ENCODE measurements at regions of chr4 and their contacts with region 1.

Region 1: GRCh38 chr4:121009578-121010478 is 62.5 kb downstream of the NDNF start:
- DNase-seq: peak in 4 of 10 donors; percentile 28 to 77 (median 64)
- ATAC-seq: peak; percentile 96 to 98
- H3K4me3 Mint-ChIP-seq: peak overlapping the region; percentile 54 to 85 (median 74)
- H3K27ac Mint-ChIP-seq: peak overlapping the region; percentile 89 to 98 (median 96)
- H3K4me1 Mint-ChIP-seq: peaks cover 42 to 95% (median 79%) of the 10 kb centered on the region in 4 donors
- H3K27me3 Mint-ChIP-seq: no peaks in the 10 kb centered on the region

Region 2: DNA sequence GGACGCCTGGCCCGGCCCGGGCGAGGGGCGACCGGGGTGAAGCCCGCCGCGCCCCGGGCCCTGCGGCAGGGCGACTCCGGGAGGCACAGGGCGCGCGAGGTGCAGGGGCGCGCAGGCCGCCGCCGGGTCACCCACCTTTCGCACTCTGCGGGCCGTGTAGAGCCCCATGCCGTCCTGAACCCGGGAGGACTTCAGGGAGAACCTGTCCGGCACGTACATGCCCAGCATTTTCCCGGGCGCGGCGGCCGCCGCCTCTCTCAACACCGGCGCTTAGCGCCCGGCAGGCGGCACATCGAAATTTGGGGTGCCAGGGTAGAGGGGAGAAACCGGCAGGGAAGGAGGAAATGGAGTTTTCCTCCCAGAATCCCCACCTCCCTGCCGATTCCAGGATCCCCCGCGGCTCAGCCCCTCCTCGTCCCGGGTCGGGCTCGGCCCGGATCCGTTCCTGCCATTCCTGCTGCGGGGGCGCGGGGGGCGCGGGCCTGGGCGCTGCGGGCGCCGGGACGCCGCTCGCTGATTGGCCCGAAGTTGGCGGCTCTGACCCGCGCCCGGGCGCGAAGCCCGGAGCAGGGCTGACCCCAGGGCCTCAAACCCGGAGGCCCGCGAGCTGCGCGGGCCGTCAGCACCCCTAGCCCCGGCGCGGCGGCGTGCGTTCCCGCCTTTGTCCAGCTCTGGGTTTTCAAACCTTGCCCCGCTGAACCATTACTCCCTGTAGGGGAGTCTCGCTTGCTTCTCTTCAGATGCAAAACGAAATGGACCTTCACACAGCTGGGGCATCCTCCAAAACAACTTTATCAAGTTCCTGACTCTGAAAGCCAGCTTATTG is 87.2 kb before region 1 on chr4 and contains the start of gene PRDM5:
- POLR2A ChIA-PET with region 1: interaction called, 12 read pairs
- DNase-seq: peak; percentile 2 to 65 (median 34)
- ATAC-seq: peak; percentile 61 to 64
- H3K4me3 Mint-ChIP-seq: peak within 1 kb of the TSS; percentile 85 to 98 (median 94)
- H3K27ac Mint-ChIP-seq: peak within 1 kb of the TSS; percentile 72 to 97 (median 92)
- H3K4me1 Mint-ChIP-seq: peaks cover 10 to 20% (median 14%) of the 10 kb centered on the region in 4 donors
- H3K27me3 Mint-ChIP-seq: peaks cover 0 to 15% (median 0%) of the 10 kb centered on the region in 5 donors
- polyA plus RNA-seq, gene PRDM5: 0.74 to 1.9 (median 0.94) TPM

Region 3: GRCh38 chr4:120995266-120996010 is 14.4 kb before region 1 on chr4:
- POLR2A ChIA-PET with region 1: interaction called, 12 read pairs
- DNase-seq: no peak
- ATAC-seq: peak in 1 of 2 donors; percentile 32
- H3K4me3 Mint-ChIP-seq: peak overlapping the region in 2 of 10 donors; percentile 29 to 51
- H3K27ac Mint-ChIP-seq: peak overlapping the region in 2 of 10 donors; percentile 5 to 36
- H3K4me1 Mint-ChIP-seq: peaks cover 17 to 41% (median 32%) of the 10 kb centered on the region in 4 donors
- H3K27me3 Mint-ChIP-seq: no peaks in the 10 kb centered on the region

Measured in naive thymus-derived CD8-positive, alpha-beta T cell (primary cell).